ENCODE measurements at regions of chr3 and their contacts with region 1.

Region 1: DNA sequence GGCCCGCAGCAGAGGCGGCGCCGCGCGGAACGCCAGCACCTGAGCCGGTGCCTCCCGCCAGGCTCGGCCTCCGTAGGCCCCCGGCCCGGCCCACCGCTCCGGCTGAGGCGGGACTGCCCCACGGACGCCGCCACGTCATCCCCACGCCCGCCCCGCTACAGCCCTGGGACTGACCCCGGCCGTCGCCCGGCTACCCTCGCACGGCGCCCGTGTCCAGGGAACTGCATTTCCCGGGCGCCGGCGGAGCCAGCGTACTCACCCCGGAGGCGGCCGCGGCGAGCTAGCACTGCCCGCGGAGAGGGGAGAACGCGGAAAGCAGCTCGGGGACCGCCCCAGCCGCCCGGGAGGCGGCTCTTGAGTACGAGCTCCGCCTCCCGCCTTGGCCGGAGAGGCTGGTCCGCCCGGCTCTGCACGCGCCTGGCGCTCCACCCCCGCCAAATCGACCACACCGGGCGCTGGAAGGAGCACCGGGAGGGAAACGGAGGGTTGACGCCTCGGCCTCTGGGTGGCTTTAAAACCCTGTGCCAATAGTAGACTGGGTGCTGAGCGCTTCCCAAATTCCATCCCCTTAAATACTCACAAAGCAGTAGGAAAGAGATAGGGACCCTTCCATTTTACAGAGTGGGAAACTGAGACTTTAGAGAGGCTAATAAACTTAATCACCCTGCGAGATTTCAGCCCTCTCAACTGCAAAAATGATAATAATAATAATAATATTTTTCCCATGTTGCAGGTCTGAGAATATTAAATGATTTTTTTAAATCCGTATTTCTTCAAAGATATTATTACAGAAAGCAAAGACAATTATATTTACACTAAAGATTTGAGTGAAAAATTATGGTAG is at the start of gene B4GALT4:
- DNase-seq: peak; percentile 57 to 74 (median 67)
- H3K4me3 ChIP-seq: peak within 1 kb of the TSS; percentile 42 to 66
- H3K4me3 Mint-ChIP-seq: peak within 1 kb of the TSS; percentile 76 to 95 (median 88)
- H3K27ac ChIP-seq: peak within 1 kb of the TSS; percentile 77
- H3K27ac Mint-ChIP-seq: peak within 1 kb of the TSS; percentile 69 to 97 (median 94)
- H3K4me1 ChIP-seq: peaks cover 50% of the 10 kb centered on the region
- H3K4me1 Mint-ChIP-seq: peaks cover 23 to 46% (median 31%) of the 10 kb centered on the region in 4 donors
- H3K27me3 ChIP-seq: no peaks in the 10 kb centered on the region
- H3K27me3 Mint-ChIP-seq: no peaks in the 10 kb centered on the region
- total RNA-seq, gene B4GALT4: 15.9 to 18.1 TPM

Region 2: GRCh38 chr3:119034256-119035013 is 206.4 kb before region 1 on chr3 and contains the start of gene IGSF11:
- CTCF ChIA-PET with region 1: interaction called, 11 read pairs
- POLR2A ChIA-PET with region 1: no interaction called
- intact Hi-C with region 1: loop called (anchors 1 kb)
- DNase-seq: peak; percentile 47 to 68 (median 62)
- H3K4me3 ChIP-seq: peak within 1 kb of the TSS in 1 of 2 donors; percentile 51
- H3K4me3 Mint-ChIP-seq: peak within 1 kb of the TSS; percentile 81 to 93 (median 86)
- H3K27ac ChIP-seq: no peak within 1 kb of the TSS
- H3K27ac Mint-ChIP-seq: peak within 1 kb of the TSS in 1 of 7 donors; percentile 43
- H3K4me1 ChIP-seq: peaks cover 4% of the 10 kb centered on the region
- H3K4me1 Mint-ChIP-seq: peaks cover 0 to 11% (median 4%) of the 10 kb centered on the region in 4 donors
- H3K27me3 ChIP-seq: peaks cover 15% of the 10 kb centered on the region
- H3K27me3 Mint-ChIP-seq: peaks cover 19 to 36% of the 10 kb centered on the region in 2 donors
- total RNA-seq, gene IGSF11: 0.22 to 0.44 TPM

Region 3: GRCh38 chr3:119219069-119219468 is 21.7 kb before region 1 on chr3:
- CTCF ChIA-PET with region 1: interaction called, 21 read pairs
- POLR2A ChIA-PET with region 1: interaction called, 8 read pairs
- intact Hi-C with region 1: loop called (anchors 2 kb)
- DNase-seq: peak; percentile 33 to 67 (median 53)
- H3K4me3 ChIP-seq: no peak overlapping the region
- H3K4me3 Mint-ChIP-seq: peak overlapping the region in 7 of 8 donors; percentile 46 to 71 (median 65)
- H3K27ac ChIP-seq: no peak overlapping the region
- H3K27ac Mint-ChIP-seq: peak overlapping the region; percentile 66 to 96 (median 91)
- H3K4me1 ChIP-seq: peaks cover 19% of the 10 kb centered on the region
- H3K4me1 Mint-ChIP-seq: peaks cover 17 to 36% (median 21%) of the 10 kb centered on the region in 4 donors
- H3K27me3 ChIP-seq: no peaks in the 10 kb centered on the region
- H3K27me3 Mint-ChIP-seq: no peaks in the 10 kb centered on the region

Region 4: DNA sequence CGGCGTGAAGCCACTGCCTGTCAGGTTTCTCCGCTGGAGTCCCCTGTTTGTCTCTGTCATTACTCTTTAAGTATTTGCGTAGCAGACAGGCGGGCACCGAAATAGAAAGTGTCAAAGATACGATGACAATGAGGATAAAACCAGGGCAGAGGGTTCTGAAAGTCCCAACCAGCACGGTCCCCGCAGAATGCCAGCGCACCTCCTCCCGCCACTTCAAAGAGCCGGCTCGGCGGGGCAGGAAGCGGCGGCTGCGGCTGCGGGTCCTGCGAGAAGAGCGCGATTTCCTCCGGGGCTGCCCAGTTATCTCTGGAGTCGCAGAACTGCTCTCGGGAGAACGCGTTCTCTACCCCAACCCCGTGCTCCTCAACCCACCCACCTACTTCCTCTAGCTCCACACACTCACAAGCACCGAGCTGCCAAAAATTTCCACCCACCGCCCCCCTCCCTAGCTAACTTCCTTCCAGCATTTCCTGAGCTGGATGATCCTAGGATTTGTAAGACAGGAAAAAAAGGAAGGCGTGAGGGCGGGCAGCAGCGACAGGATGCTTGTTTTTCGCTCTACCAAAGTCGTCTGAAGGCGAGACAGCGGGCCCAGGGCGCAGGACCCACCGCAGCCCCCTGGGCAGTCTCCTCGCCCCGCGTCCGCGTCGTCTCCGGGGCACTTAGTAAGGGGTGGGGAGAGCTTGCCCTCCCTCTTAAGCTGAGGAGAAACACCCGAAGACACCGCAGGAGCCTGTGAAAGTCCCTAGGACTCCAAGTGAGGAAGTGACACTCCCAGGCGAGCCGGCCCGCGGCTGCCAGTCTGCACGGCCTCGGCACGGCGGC is 53.3 kb after region 1 on chr3 and contains the start of gene ARHGAP31:
- CTCF ChIA-PET with region 1: interaction called, 24 read pairs
- POLR2A ChIA-PET with region 1: interaction called, 30 read pairs
- intact Hi-C with region 1: loop called (anchors 1 kb)
- DNase-seq: peak; percentile 92 to 95 (median 94)
- H3K4me3 ChIP-seq: peak within 1 kb of the TSS; percentile 79 to 85
- H3K4me3 Mint-ChIP-seq: peak within 1 kb of the TSS; percentile 92 to 97 (median 95)
- H3K27ac ChIP-seq: peak within 1 kb of the TSS; percentile 93
- H3K27ac Mint-ChIP-seq: peak within 1 kb of the TSS; percentile 97 to 99 (median 98)
- H3K4me1 ChIP-seq: peaks cover 55% of the 10 kb centered on the region
- H3K4me1 Mint-ChIP-seq: peaks cover 39 to 85% (median 55%) of the 10 kb centered on the region in 4 donors
- H3K27me3 ChIP-seq: no peaks in the 10 kb centered on the region
- H3K27me3 Mint-ChIP-seq: no peaks in the 10 kb centered on the region
- total RNA-seq, gene ARHGAP31: 4.5 to 5.8 TPM

Region 5: DNA sequence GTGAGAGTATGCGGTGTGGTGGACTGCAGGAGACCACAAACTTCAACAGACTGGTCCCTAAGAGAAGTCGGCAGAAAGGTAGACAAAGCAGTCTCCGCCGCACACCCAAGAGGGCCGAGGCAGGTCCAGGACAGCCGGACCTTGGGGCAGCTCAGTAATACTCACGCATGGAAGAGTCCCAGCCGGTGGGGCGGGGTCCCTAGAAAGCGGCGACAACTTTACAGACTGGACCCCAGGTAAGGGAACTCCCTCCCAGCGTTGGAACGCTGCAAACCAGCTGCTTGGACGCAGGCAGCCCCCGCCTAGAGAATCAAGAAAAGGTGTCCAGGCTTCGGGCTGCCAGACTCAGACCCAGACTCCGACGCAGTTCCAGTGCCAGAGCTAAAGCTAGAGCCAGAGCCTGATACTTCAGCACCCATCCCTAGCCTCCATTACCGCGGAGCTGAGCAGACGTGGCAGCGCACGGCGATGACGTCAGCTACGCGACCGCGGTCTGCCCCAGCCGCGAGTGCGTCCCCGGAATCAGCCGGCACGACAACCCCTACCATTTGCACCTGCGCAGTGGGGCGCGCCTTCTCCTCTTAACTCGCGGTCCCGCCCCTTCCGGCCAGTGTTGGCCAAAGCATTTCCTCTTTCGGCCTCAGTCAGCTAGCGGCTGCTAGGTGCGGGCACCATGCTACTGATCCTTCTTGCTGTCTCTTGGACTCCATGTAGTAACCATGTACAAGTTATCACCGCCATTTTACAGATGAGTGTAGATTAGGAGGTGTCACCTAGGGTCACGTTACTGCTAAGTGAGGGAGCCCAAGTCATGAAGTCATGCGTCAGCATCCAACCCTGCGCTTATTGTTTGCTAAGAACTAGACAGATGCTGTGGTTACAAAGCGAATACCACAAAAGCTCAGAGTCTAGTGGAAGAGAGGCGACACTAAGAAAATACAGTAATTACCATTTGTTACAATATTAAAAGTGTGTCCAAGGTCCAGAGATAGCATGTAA is 222.7 kb after region 1 on chr3 and contains the start of gene TMEM39A:
- CTCF ChIA-PET with region 1: interaction called, 4 read pairs
- POLR2A ChIA-PET with region 1: interaction called, 12 read pairs
- intact Hi-C with region 1: loop called (anchors 1 kb)
- DNase-seq: peak; percentile 98 to 99 (median 99)
- H3K4me3 ChIP-seq: peak within 1 kb of the TSS; percentile 91 to 98
- H3K4me3 Mint-ChIP-seq: peak within 1 kb of the TSS; percentile 93 to 97 (median 95)
- H3K27ac ChIP-seq: peak within 1 kb of the TSS; percentile 91
- H3K27ac Mint-ChIP-seq: peak within 1 kb of the TSS; percentile 98 to 99 (median 99)
- H3K4me1 ChIP-seq: peaks cover 33% of the 10 kb centered on the region
- H3K4me1 Mint-ChIP-seq: peaks cover 24 to 58% (median 38%) of the 10 kb centered on the region in 4 donors
- H3K27me3 ChIP-seq: no peaks in the 10 kb centered on the region
- H3K27me3 Mint-ChIP-seq: peaks cover 0 to 2% of the 10 kb centered on the region in 2 donors
- total RNA-seq, gene TMEM39A: 46.1 to 47.4 TPM

Region 6: GRCh38 chr3:120275618-120276017 is 1034.8 kb after region 1 on chr3:
- CTCF ChIA-PET with region 1: no interaction called
- POLR2A ChIA-PET with region 1: no interaction called
- intact Hi-C with region 1: no loop called
- DNase-seq: no peak
- H3K4me3 ChIP-seq: no peak overlapping the region
- H3K4me3 Mint-ChIP-seq: no peak overlapping the region
- H3K27ac ChIP-seq: no peak overlapping the region
- H3K27ac Mint-ChIP-seq: no peak overlapping the region
- H3K4me1 ChIP-seq: no peaks in the 10 kb centered on the region
- H3K4me1 Mint-ChIP-seq: no peaks in the 10 kb centered on the region
- H3K27me3 ChIP-seq: no peaks in the 10 kb centered on the region
- H3K27me3 Mint-ChIP-seq: peaks cover 21% of the 10 kb centered on the region in 2 donors